Natural killer cell (primary cell): ENCODE measurements at regions of chr16 and their contacts with region 1.

Region 1: GRCh38 chr16:68022704-68023522 is at the starts of genes DDX28 and DUS2:
- DNase-seq: peak; percentile 97 to 98
- ATAC-seq: peak; percentile 90 to 96 (median 93)
- H3K4me3 ChIP-seq: peak within 1 kb of the TSS; percentile 83
- H3K4me3 Mint-ChIP-seq: peak within 1 kb of the TSS; percentile 99
- H3K27ac ChIP-seq: peak within 1 kb of the TSS; percentile 70
- H3K27ac Mint-ChIP-seq: peak within 1 kb of the TSS; percentile 91 to 96
- H3K4me1 ChIP-seq: peaks cover 26% of the 10 kb centered on the region
- H3K4me1 Mint-ChIP-seq: peaks cover 16 to 31% of the 10 kb centered on the region in 2 donors
- H3K27me3 ChIP-seq: no peaks in the 10 kb centered on the region
- H3K27me3 Mint-ChIP-seq: no peaks in the 10 kb centered on the region
- CTCF ChIP-seq: no peak
- total RNA-seq, gene DDX28: 17.4 to 19.0 (median 17.9) TPM
- total RNA-seq, gene DUS2: 21.6 to 24.2 (median 22.7) TPM

Region 2: DNA sequence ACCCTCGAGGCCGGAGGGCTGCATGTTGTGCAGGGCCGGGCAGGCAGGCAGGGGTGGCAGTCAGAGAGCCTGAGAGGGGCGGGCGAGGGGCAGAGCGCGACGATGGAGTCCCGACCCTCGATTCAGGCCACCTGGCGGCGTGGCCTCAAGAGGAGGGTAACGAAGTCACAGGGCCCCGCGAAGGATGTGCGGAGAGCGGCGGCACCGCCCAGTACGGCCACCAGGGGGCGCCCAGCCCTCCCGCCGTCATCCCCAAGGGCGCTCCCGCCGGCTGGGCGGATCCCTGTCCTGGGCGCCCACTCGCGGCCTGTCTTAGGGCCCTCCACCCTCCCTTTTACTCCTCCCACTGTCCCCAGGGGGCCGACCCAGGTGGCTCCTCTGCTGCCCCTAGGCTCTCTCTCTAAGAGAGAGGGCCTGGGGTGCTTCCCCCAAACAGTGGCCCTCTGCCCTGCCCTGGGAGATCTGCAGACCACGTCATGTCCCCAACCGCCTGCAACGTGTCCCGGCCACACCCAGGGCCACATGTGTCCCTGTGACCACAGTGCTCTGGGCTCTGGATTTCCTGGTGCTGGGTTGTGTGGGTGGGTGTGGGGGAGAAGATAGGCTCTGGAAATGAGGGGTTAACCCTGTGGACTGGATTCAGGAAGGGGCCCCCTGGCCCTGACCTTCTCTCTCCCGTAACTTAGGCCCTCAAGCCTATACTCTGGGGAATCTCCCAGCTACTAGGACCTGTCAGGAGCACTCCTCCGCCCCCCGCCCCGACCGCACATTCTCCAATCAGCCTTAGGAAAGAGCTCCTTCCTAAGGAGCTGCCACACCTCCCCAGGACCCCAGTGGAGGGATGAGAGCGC is 29.5 kb before region 1 on chr16:
- intact Hi-C with region 1: loop called (anchors 1 kb)
- DNase-seq: peak; percentile 85 to 91
- ATAC-seq: peak; percentile 88 to 95 (median 90)
- H3K4me3 ChIP-seq: peak overlapping the region; percentile 32
- H3K4me3 Mint-ChIP-seq: peak overlapping the region; percentile 83
- H3K27ac ChIP-seq: peak overlapping the region; percentile 89
- H3K27ac Mint-ChIP-seq: peak overlapping the region; percentile 89 to 95
- H3K4me1 ChIP-seq: peaks cover 75% of the 10 kb centered on the region
- H3K4me1 Mint-ChIP-seq: peaks cover 24 to 53% of the 10 kb centered on the region in 2 donors
- H3K27me3 ChIP-seq: no peaks in the 10 kb centered on the region
- H3K27me3 Mint-ChIP-seq: no peaks in the 10 kb centered on the region
- CTCF ChIP-seq: peak; percentile 92